Astrocyte of the cerebellum (primary cell): ENCODE measurements at regions of chr3 and their contacts with region 1.

Region 1: DNA sequence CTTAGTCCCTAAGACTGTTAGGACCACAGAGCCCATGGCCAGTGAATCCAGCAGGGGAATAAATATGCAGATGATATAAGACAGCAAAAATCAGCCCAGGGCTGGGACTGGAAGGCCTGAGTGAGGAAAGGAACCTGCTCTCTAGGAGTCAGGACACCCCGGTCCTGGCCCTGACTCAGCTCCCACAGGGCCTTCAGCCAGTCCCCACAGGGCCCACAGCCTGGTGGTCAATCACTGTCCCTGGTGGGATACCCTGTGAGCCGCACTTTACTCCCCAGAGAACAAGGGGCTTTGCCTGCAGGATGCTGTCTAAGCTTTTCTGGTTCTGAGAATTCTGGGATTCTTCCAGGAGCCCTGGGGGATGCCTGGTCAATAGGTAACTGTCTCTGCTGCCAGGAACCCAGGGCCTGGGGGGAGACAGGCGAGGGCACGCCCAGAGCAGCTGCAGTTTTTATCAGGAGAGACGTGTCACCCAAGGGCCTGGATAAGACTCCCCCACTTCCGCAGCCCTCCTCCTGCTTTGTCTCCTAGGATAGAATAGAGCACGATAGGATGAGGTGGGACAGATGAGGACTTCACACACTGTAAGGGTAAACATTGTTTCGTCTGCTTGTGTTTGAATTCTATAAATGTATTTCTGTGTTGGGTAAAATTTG is 49.5 kb upstream of the MCF2L2 start:
- DNase-seq: no peak
- H3K4me3 ChIP-seq: no peak overlapping the region
- CTCF ChIP-seq: no peak

Region 2: GRCh38 chr3:183641882-183642281 is 164.0 kb after region 1 on chr3:
- in situ Hi-C with region 1: loop called (anchors 10 kb)
- DNase-seq: no peak
- H3K4me3 ChIP-seq: no peak overlapping the region
- CTCF ChIP-seq: no peak